AG04449 (cell line): ENCODE measurements at regions of chr9 and their contacts with region 1.

Region 1: DNA sequence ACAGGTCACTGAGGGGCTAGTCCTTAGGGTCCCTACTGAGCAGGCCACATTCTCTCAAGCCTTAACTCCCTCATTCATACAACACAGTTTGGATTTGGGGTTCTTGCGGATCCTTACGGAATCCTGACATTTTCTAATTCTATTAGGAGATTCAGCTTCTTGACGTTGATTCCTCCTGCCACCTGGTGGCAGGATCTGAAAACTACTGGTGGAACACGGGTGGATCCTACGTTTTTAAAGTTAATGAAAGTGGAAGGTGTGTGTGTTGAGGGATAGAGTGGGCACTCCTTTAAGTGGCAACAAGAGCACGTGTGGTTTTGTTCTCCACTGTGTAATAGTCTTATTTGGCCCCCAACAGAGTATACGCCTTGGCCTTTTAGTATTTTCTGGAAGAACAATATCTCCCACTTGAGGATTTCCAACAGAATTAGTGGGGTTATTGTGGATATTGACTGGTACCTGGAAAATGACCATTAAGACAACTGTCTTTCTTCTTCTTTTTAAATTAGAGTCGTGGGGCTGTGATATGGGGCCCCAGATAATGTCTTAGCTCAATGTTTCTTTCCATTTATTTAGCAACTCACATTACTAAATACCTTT is 25.2 kb downstream of the SLC28A3 start:
- DNase-seq: no peak
- H3K4me3 ChIP-seq: no peak overlapping the region
- CTCF ChIP-seq: peak; percentile 55

Region 2: DNA sequence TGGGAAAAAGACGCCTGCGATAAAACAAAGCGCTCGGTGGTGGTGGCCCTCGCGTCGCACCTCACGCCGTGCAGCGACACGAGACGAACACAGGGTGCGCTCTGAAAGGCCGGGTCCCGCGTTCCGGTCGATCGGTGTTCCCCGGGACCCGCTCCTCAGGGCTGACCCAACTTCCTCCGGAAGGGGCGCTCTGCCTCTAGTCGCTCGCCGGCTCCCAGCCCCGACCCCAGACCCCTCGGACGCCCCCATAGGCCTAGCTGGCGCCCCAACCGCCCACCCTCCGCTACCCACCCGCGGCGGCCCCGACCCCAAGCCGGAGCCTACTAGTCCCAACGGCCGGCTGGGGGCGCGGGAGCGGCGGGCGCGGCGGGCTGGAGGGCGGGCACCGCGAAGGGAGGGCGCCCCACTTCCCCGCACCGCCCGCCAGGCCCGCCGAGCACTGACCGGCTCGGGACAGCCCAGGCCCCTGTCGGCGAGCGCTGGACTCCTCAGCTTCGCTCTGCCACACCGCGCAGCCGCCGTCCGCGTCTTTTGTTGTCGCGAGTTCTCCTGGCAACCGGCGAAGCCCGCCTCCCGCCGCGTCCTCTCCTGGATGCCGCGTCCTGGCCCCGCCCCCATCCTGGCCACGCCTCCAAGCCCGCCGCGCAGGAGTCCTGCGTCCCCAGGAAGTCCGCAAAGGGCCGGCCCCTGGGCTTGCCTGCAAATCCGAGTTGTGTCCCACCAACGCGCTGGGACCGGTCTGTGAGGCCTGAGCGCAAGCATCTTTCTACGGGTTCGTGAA is 394.3 kb before region 1 on chr9 and contains the start of gene KIF27:
- CTCF ChIA-PET with region 1: interaction called, 15 read pairs
- POLR2A ChIA-PET with region 1: no interaction called
- DNase-seq: peak; percentile 75
- H3K4me3 ChIP-seq: peak within 1 kb of the TSS; percentile 72
- CTCF ChIP-seq: peak; percentile 59

Region 3: GRCh38 chr9:83937911-83938323 is 377.5 kb before region 1 on chr9:
- CTCF ChIA-PET with region 1: interaction called, 34 read pairs
- POLR2A ChIA-PET with region 1: no interaction called
- DNase-seq: no peak
- H3K4me3 ChIP-seq: no peak overlapping the region
- CTCF ChIP-seq: peak; percentile 45

Region 4: DNA sequence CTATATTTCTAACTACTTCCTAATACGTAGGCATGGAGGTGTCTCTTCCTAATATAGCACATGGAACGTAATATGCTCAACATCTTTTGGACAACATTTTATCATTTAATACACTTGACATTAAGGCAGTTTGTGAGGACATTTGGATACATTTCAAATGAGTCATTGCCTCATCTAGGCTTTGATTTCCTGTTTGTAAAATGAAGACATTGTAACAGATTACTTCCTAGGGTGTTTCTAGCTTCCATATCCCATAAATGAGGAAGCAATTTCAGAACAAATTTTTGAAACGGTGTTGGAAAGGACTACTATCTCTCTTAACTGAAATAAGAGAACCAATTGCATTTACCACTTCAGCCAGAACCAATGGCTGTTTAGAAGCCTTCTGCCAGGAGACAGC is 13.5 kb before region 1 on chr9:
- CTCF ChIA-PET with region 1: interaction called, 43 read pairs
- POLR2A ChIA-PET with region 1: no interaction called
- DNase-seq: no peak
- H3K4me3 ChIP-seq: no peak overlapping the region
- CTCF ChIP-seq: no peak

Region 5: GRCh38 chr9:84325347-84325982 is 10.1 kb after region 1 on chr9:
- CTCF ChIA-PET with region 1: interaction called, 14 read pairs
- POLR2A ChIA-PET with region 1: no interaction called
- DNase-seq: no peak
- H3K4me3 ChIP-seq: no peak overlapping the region
- CTCF ChIP-seq: no peak